Heart left ventricle (tissue), 16 donors: ENCODE measurements at regions of chr9 and their contacts with region 1.

Region 1: GRCh38 chr9:94681508-94681907 is 42.2 kb upstream of the FBP1 start:
- DNase-seq: peak; percentile 69 to 87 (median 82)
- ATAC-seq: peak; percentile 92 to 98 (median 98)
- H3K4me3 ChIP-seq: no peak overlapping the region
- H3K27ac ChIP-seq: peak overlapping the region in 6 of 12 donors; percentile 11 to 47 (median 32)
- H3K4me1 ChIP-seq: peaks cover 0 to 9% (median 0%) of the 10 kb centered on the region in 12 donors
- H3K27me3 ChIP-seq: no peaks in the 10 kb centered on the region
- CTCF ChIP-seq: peak; percentile 62 to 85 (median 78)
- POLR2A ChIP-seq: no peak

Region 2: GRCh38 chr9:94767331-94768072 is 86.0 kb after region 1 on chr9:
- intact Hi-C with region 1: loop called in 4 of 10 experiments (anchors 5 to 10 kb)
- DNase-seq: no peak
- ATAC-seq: no peak
- H3K4me3 ChIP-seq: no peak overlapping the region
- H3K27ac ChIP-seq: no peak overlapping the region
- H3K4me1 ChIP-seq: peaks cover 0 to 3% (median 0%) of the 10 kb centered on the region in 12 donors
- H3K27me3 ChIP-seq: no peaks in the 10 kb centered on the region
- CTCF ChIP-seq: no peak
- POLR2A ChIP-seq: no peak

Region 3: DNA sequence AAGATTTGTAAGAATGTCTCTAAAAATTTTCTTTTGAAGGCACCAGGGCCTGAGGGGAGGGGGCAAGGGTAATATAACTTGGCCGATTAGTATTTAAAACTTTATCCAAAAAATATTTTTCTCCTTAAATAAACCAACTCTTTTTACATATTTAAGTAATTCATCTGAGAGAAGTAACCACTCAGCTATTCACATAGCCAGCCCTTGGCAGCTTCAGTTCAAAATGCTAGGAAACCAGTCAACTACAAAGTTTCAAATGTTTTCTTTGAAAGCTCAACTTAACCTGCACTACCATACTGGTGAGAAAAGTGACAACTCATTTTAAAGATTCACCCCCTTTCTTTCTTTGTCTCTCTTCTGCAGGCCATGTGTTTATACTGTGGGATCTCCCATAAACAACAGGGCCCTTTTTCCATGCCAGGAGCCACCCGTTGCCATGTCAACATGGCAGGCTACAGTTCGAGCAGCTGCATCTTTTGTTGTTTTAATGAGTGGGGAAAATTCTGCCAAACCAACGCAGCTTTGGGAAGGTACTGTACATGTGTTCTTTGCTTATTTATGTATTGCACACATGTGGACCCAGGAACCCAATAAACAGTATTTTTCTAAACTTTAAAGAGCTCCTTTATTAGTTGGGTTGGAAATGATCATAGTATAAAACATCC is 91.3 kb after region 1 on chr9:
- intact Hi-C with region 1: loop called in 4 of 10 experiments (anchors 5 to 10 kb)
- DNase-seq: no peak
- ATAC-seq: no peak
- H3K4me3 ChIP-seq: no peak overlapping the region
- H3K27ac ChIP-seq: no peak overlapping the region
- H3K4me1 ChIP-seq: peaks cover 0 to 9% (median 0%) of the 10 kb centered on the region in 12 donors
- H3K27me3 ChIP-seq: no peaks in the 10 kb centered on the region
- CTCF ChIP-seq: no peak
- POLR2A ChIP-seq: no peak

Region 4: DNA sequence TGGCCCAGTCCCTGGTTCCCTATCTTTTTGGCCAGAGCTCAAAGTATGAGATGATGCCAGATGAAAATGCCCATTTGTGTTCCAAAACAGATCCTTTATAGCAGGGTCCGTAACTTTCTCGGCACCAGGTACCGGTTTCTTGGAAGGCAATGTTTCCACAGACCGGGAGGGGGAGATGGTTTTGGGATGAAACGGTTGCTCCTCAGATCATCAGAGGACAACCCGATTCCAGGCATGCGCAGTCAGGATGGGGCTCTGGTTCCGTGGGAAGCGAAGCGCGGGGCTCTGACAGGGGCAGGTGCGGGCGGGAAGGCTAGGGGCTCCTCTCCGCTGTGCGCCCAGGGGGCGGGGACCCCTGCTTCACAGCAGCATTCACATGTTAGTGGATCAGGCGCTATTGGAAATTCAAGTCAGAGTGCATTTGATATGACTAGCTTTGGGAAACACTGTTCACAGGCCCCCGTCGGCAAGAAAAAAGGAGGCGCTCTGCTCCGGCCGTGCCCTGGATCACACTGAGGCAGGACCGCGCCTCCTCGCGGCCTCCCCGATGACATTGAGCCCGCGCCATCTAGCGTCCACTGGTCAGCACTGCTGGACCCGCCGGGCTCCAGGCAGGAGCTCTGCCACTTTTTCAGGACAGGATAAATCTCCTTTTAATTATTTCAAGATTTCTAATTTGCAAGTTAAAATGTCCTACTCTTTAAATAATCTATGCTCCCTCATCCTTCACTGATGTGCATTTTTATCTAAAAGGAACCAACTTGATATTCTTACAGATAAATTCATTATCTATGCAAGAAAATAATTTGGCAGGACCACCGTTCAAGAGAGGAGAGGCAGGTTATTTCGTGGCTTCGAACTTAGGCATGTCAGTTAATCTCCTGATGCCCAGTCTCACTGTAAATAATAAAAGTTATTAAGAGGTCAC is 446.0 kb after region 1 on chr9:
- intact Hi-C with region 1: loop called (anchors 1 to 5 kb)
- DNase-seq: peak; percentile 86 to 92 (median 88)
- ATAC-seq: peak; percentile 83 to 91 (median 89)
- H3K4me3 ChIP-seq: peak overlapping the region in 11 of 12 donors; percentile 8 to 58 (median 45)
- H3K27ac ChIP-seq: peak overlapping the region in 4 of 12 donors; percentile 25 to 59 (median 48)
- H3K4me1 ChIP-seq: peaks cover 0 to 24% (median 8%) of the 10 kb centered on the region in 12 donors
- H3K27me3 ChIP-seq: no peaks in the 10 kb centered on the region
- CTCF ChIP-seq: peak; percentile 92 to 99 (median 98)
- POLR2A ChIP-seq: no peak

Region 5: GRCh38 chr9:95132406-95133324 is 451.2 kb after region 1 on chr9:
- intact Hi-C with region 1: loop called (anchors 1 to 5 kb)
- DNase-seq: no peak
- ATAC-seq: peak in 1 of 4 donors; percentile 9
- H3K4me3 ChIP-seq: no peak overlapping the region
- H3K27ac ChIP-seq: no peak overlapping the region
- H3K4me1 ChIP-seq: peaks cover 0 to 6% (median under 1%) of the 10 kb centered on the region in 12 donors
- H3K27me3 ChIP-seq: no peaks in the 10 kb centered on the region
- CTCF ChIP-seq: no peak
- POLR2A ChIP-seq: no peak

Region 6: GRCh38 chr9:95268681-95269080 is 587.2 kb after region 1 on chr9:
- intact Hi-C with region 1: loop called in 3 of 10 experiments (anchors 5 to 10 kb)
- DNase-seq: peak in 1 of 5 donors; percentile 20
- ATAC-seq: peak; percentile 37 to 86 (median 74)
- H3K4me3 ChIP-seq: no peak overlapping the region
- H3K27ac ChIP-seq: no peak overlapping the region
- H3K4me1 ChIP-seq: peaks cover 0 to 2% (median 0%) of the 10 kb centered on the region in 12 donors
- H3K27me3 ChIP-seq: no peaks in the 10 kb centered on the region
- CTCF ChIP-seq: peak in 11 of 12 donors; percentile 19 to 60 (median 38)
- POLR2A ChIP-seq: no peak